ENCODE measurements at regions of chr17 and their contacts with region 1.

Region 1: GRCh38 chr17:76506408-76507349 is 5.5 kb upstream of the RHBDF2 start:
- DNase-seq: peak; percentile 83
- ATAC-seq: peak; percentile 70 to 75

Region 2: DNA sequence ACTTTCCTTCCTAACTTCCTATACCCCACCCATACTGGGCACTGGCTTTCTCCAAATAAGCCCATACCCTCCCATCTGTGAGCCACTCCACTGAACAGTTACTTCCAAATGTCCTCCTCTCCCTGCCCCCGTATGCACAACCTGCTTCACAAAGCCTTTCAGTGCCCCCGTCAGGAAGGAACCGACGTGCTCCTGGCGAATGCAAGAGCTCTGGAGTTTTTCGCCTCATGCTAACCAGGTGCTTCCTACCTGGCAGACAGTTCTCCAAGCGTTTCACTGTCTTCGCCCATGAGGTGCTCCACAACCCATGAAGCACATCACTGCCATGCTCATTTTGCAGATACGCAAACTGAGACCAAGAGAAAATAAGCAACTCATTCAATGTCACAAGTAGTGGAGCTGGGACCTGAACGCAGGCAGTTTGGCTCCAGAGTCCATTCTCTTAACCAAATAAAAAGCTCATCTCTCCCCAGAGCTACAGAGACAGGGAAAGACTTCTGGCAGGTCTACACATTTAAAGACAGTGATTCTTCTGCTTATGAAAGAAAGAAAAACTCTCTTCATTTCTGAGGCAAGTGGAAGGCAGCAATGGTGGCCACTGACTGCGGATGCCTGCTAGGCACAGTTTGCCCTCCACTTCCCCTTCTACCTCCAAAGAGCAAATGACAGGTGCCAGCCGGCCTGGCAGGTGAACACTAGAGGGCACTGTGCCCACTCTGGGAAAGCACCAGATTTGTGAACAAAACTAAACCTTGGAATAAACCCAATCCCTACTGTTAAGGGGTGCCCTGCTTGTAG is 98.4 kb before region 1 on chr17:
- intact Hi-C with region 1: loop called in 1 of 2 experiments (anchors 2 kb)
- DNase-seq: peak; percentile 64
- ATAC-seq: no peak

Region 3: DNA sequence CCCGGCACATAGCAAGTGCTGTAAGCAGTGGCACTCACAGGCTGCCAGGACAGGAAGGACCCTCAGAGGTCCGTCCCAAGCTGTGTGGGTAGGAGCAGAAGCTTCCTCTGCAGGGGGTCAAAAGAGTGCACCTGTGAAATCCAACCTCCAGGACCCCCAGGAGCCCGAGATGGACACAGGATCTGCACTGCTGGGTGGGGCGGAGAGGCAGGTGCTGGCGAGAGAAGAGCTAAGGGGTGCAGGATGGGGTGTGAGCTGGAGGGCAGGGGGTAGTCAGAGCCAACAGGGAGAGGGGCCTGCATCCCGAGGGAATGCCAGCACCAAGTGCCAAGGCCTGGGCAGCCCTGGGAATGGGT is 39.9 kb before region 1 on chr17:
- intact Hi-C with region 1: loop called (anchors 1 kb)
- DNase-seq: no peak
- ATAC-seq: no peak

Region 4: GRCh38 chr17:76523084-76524037 is 16.7 kb after region 1 on chr17:
- intact Hi-C with region 1: no loop called
- DNase-seq: peak; percentile 75
- ATAC-seq: peak; percentile 36 to 62

Measured in left cardiac atrium (tissue), 4 donors.